Ascending aorta (tissue), 2 donors: ENCODE measurements at regions of chr19 and their contacts with region 1.

Region 1: GRCh38 chr19:18388100-18388959 is 2.4 kb downstream of the GDF15 start:
- DNase-seq: peak in 1 of 2 donors; percentile 87
- H3K4me3 ChIP-seq: peak overlapping the region; percentile 46 to 47
- H3K27ac ChIP-seq: peak overlapping the region in 1 of 2 donors; percentile 19
- H3K4me1 ChIP-seq: peaks cover 3 to 16% of the 10 kb centered on the region in 2 donors
- H3K27me3 ChIP-seq: no peaks in the 10 kb centered on the region
- CTCF ChIP-seq: peak; percentile 99 to 100 (median 100)

Region 2: DNA sequence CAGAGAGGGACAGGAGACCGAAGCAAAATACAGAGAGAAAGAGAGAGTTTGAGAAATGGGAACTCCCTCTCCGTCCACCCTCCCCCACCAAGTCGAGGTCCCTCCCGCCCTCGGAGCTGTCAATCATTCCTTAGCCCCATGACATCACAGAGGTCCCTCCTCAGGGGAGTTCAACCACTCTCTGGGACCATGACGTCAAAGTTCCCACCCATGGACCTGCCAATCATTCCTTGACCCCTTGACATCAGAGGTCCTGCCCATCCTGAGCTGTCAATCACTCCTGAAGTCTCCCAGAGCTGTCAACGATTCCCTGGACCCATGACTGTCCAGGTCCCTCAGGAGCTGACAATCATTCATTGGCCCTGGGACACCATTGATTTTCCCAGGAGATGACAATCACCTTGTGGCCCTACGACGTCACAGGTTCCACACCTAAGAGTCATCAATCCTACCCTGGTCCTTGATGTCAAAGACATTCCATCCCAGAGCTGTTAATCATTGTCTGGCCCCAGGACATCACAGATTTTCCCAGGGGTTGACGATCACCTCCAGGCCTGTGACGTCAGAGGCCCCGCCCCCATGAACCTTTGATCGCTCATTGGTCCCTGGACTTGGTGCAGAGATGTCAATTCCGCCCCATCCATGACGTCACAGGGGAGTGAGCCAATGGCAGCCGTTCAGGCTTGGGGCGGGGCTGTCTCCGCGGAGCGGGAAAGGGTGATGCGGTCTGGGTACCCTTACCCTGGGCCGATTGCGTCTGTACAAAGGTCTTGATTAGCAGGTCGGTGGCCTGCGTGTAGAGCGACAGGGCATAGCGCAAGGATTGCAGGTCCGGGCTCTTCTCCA is 771.1 kb before region 1 on chr19:
- intact Hi-C with region 1: no loop called
- DNase-seq: no peak
- H3K4me3 ChIP-seq: peak overlapping the region in 1 of 2 donors; percentile 54
- H3K27ac ChIP-seq: no peak overlapping the region
- H3K4me1 ChIP-seq: peaks cover 0 to 3% of the 10 kb centered on the region in 2 donors
- H3K27me3 ChIP-seq: no peaks in the 10 kb centered on the region
- CTCF ChIP-seq: no peak

Region 3: GRCh38 chr19:18306888-18307260 is 81.5 kb before region 1 on chr19:
- intact Hi-C with region 1: no loop called
- DNase-seq: no peak
- H3K4me3 ChIP-seq: peak overlapping the region in 1 of 2 donors; percentile 44
- H3K27ac ChIP-seq: peak overlapping the region; percentile 98 to 100
- H3K4me1 ChIP-seq: peaks cover 30 to 60% of the 10 kb centered on the region in 2 donors
- H3K27me3 ChIP-seq: no peaks in the 10 kb centered on the region
- CTCF ChIP-seq: no peak

Region 4: GRCh38 chr19:18364826-18365528 is 23.4 kb before region 1 on chr19:
- intact Hi-C with region 1: loop called (anchors 2 kb)
- DNase-seq: peak in 1 of 2 donors; percentile 90
- H3K4me3 ChIP-seq: peak overlapping the region in 1 of 2 donors; percentile 2
- H3K27ac ChIP-seq: peak overlapping the region; percentile 81 to 85
- H3K4me1 ChIP-seq: peaks cover 5 to 16% of the 10 kb centered on the region in 2 donors
- H3K27me3 ChIP-seq: no peaks in the 10 kb centered on the region
- CTCF ChIP-seq: no peak

Region 5: GRCh38 chr19:18408053-18408476 is 19.7 kb after region 1 on chr19:
- intact Hi-C with region 1: loop called (anchors 1 kb)
- DNase-seq: no peak
- H3K4me3 ChIP-seq: no peak overlapping the region
- H3K27ac ChIP-seq: no peak overlapping the region
- H3K4me1 ChIP-seq: no peaks in the 10 kb centered on the region
- H3K27me3 ChIP-seq: no peaks in the 10 kb centered on the region
- CTCF ChIP-seq: peak in 1 of 3 experiments; percentile 33

Region 6: GRCh38 chr19:18450931-18451845 is 62.9 kb after region 1 on chr19:
- intact Hi-C with region 1: no loop called
- DNase-seq: peak in 1 of 2 donors; percentile 93
- H3K4me3 ChIP-seq: no peak overlapping the region
- H3K27ac ChIP-seq: peak overlapping the region in 1 of 2 donors; percentile 22
- H3K4me1 ChIP-seq: peaks cover 3 to 7% of the 10 kb centered on the region in 2 donors
- H3K27me3 ChIP-seq: no peaks in the 10 kb centered on the region
- CTCF ChIP-seq: peak; percentile 95 to 99 (median 95)